K562 (cell line): ENCODE measurements at regions of chr6 and their contacts with region 1.

Region 1: GRCh38 chr6:154928325-154928922 is 66.7 kb upstream of the TIAM2 start:
- DNase-seq: peak; percentile 69 to 80 (median 74)
- ATAC-seq: peak; percentile 88
- H3K4me3 ChIP-seq: no peak overlapping the region
- H3K27ac ChIP-seq: no peak overlapping the region
- H3K4me1 ChIP-seq: peaks cover 0 to 15% of the 10 kb centered on the region in 2 experiments; a peak in 3 of 5 replicates
- H3K27me3 ChIP-seq: peaks cover 0 to 6% of the 10 kb centered on the region in 2 experiments; a peak in 1 of 5 replicates
- CTCF ChIP-seq: peak; percentile 80 to 92 (median 84)
- EP300 ChIP-seq: no peak
- POLR2A ChIP-seq: no peak
- RAD21 ChIP-seq: peak; percentile 91 to 93

Region 2: DNA sequence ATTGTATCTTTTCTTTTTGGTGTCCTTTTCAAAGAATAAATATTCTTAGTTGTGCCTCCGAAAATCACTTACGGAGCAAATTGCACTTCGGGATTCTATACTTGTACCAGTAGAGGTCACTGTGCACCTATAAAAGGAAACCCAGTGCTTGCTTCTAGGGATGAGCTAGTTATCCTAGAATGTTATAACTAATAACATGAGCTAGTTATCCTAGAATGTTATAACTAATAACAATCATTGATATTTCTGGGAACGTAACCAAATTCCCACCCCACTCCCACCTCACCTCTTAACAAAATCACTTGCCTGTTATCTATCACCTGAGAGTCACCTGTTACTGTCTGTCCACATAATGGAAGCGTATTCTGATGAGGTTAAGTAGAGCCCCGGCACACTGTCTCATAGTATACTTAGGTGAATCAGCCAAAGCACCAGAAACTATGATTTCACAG is 60.3 kb before region 1 on chr6:
- CTCF ChIA-PET with region 1: no interaction called
- POLR2A ChIA-PET with region 1: no interaction called
- in situ Hi-C with region 1: no loop called
- intact Hi-C with region 1: loop called (anchors 5 kb)
- DNase-seq: peak; percentile 42 to 63 (median 50)
- ATAC-seq: peak; percentile 84
- H3K4me3 ChIP-seq: no peak overlapping the region
- H3K27ac ChIP-seq: no peak overlapping the region
- H3K4me1 ChIP-seq: no peaks in the 10 kb centered on the region; a peak in 1 of 5 replicates
- H3K27me3 ChIP-seq: no peaks in the 10 kb centered on the region
- CTCF ChIP-seq: peak; percentile 63 to 82 (median 75)
- EP300 ChIP-seq: no peak
- POLR2A ChIP-seq: no peak
- RAD21 ChIP-seq: peak; percentile 75 to 77

Region 3: DNA sequence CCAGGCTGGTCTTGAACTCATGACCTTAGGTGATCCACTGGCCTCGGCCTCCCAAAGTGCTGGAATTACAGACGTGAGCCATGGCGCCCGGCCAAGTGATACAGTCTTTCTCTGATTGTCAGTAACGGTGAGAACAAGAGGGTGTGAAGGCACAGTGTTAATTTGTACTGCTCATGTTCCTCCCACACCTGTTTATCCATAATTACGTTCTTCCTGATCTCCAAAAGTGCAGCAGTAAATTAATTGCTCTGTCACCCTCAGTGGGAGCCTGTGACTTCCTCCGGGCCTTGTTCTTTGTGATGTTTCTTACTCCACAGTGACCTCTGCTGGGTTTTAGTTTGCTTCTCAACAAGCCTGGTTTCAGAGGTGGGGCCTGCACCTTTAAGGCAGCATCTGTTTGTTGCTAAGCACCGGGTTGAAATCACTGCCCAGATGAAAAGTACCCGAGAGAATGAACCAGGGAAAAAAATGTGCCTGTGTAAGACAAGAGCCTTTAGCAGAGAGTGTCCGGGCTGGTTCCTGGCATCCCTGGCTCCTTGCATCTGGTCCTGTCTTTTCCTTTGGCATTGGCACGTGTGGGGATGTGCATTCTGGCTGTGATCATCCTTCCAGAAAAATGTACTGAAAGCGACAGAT is 246.3 kb after region 1 on chr6:
- CTCF ChIA-PET with region 1: interaction called, 34 read pairs
- POLR2A ChIA-PET with region 1: no interaction called
- in situ Hi-C with region 1: loop called (anchors 5 kb)
- intact Hi-C with region 1: loop called (anchors 1 kb)
- DNase-seq: peak; percentile 60 to 83 (median 72)
- ATAC-seq: peak; percentile 98
- H3K4me3 ChIP-seq: no peak overlapping the region
- H3K27ac ChIP-seq: no peak overlapping the region
- H3K4me1 ChIP-seq: peaks cover 0 to 2% of the 10 kb centered on the region in 2 experiments; a peak in 1 of 5 replicates
- H3K27me3 ChIP-seq: peaks cover 5 to 15% of the 10 kb centered on the region in 2 experiments; a peak in 3 of 5 replicates
- CTCF ChIP-seq: peak; percentile 71 to 79 (median 79)
- EP300 ChIP-seq: no peak
- POLR2A ChIP-seq: no peak
- RAD21 ChIP-seq: peak; percentile 79 to 94

Region 4: DNA sequence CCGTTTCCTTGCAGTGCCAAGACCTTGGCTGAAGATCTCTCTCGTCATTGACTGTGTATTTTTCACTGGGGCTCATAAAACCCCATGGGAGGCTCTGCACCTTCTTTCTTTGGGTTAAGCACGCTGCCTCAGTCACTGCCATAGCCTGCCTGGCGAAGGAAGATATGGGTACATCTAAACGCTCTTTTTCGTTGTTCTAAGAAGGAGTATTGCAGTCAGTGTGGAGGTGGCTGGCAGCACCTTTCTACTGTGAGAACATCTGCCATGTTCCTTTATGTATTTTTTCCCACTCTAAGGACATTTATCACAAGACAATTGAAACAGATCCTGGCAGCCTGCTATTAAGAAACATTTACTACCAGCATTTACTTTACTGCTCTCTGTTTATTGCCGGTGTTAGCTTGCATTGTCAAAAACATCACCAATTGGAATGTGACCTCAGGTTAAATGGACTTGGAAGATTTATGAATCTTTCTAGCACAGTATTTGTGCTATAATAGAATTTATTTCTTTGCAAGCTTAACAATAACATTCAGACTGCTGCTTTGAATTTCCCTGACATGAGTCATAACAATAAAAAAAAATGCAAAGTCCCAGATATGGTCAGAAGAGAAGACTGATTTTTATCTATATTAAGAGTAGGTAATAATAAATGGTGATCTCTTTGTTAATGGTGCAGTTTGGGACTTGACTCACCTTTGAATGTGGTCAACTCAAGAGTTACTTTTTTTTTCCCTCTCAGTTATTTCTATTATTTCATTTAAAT is 273.2 kb after region 1 on chr6:
- CTCF ChIA-PET with region 1: no interaction called
- POLR2A ChIA-PET with region 1: no interaction called
- in situ Hi-C with region 1: no loop called
- intact Hi-C with region 1: no loop called
- DNase-seq: no peak
- ATAC-seq: no peak
- H3K4me3 ChIP-seq: no peak overlapping the region
- H3K27ac ChIP-seq: no peak overlapping the region
- H3K4me1 ChIP-seq: no peaks in the 10 kb centered on the region
- H3K27me3 ChIP-seq: peaks cover 7 to 17% of the 10 kb centered on the region in 2 experiments
- CTCF ChIP-seq: no peak
- EP300 ChIP-seq: no peak
- POLR2A ChIP-seq: no peak
- RAD21 ChIP-seq: no peak

Region 5: GRCh38 chr6:155248008-155249001 is 319.9 kb after region 1 on chr6:
- CTCF ChIA-PET with region 1: interaction called, 4 read pairs
- POLR2A ChIA-PET with region 1: no interaction called
- in situ Hi-C with region 1: no loop called
- intact Hi-C with region 1: loop called (anchors 5 kb)
- DNase-seq: peak in 3 of 4 experiments; percentile 22 to 47 (median 33)
- ATAC-seq: peak; percentile 68
- H3K4me3 ChIP-seq: no peak overlapping the region
- H3K27ac ChIP-seq: no peak overlapping the region
- H3K4me1 ChIP-seq: no peaks in the 10 kb centered on the region; a peak in 1 of 5 replicates
- H3K27me3 ChIP-seq: 0 out of 5 replicates have a peak, but pooled peaks cover 0 to under 1% of the 10 kb centered on the region in 2 experiments
- CTCF ChIP-seq: peak; percentile 53
- EP300 ChIP-seq: no peak
- POLR2A ChIP-seq: no peak
- RAD21 ChIP-seq: peak in 1 of 2 experiments; percentile 42; a peak in 1 of 4 replicates